ENCODE measurements at regions of chr3 and their contacts with region 1.

Region 1: DNA sequence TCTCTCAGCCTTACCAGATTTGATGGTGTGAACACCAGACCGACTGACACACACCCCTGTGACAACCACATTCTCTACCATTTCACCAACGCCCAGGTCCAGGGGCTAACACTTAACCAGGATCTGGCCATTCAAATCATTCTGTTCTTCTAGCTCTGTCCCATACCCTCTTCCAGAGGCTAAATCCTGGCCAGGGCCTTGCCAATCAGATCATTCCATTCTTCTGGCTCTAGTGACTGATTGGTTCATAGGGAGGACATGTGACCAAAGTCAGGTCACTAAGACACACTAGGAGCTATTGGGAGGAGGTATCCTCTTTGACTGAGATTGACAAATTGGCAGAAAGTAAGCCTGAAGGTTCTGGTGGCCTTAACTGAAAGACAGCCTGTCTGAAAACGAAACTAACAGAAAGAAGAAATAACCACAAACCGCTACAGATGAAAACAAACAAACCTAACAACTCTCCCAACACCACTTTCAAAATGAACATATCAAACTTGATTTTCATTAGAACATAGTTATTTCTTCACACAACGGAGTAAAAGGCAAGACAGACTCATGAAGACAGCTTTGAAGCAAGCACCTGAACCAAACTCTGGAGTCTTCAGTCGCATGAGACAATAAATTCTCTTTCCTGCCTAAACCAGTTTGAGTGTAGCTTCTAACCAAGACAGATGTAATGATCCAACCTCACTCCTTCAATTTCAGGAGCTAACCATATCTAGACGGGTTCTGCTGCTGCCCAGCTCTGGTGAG is 68.5 kb downstream of the TRANK1 start:
- DNase-seq: peak; percentile 41
- ATAC-seq: peak; percentile 97
- H3K4me3 Mint-ChIP-seq: peak overlapping the region; percentile 82
- H3K27ac Mint-ChIP-seq: peak overlapping the region; percentile 95
- H3K4me1 Mint-ChIP-seq: peaks cover 25% of the 10 kb centered on the region
- H3K27me3 Mint-ChIP-seq: no peaks in the 10 kb centered on the region

Region 2: DNA sequence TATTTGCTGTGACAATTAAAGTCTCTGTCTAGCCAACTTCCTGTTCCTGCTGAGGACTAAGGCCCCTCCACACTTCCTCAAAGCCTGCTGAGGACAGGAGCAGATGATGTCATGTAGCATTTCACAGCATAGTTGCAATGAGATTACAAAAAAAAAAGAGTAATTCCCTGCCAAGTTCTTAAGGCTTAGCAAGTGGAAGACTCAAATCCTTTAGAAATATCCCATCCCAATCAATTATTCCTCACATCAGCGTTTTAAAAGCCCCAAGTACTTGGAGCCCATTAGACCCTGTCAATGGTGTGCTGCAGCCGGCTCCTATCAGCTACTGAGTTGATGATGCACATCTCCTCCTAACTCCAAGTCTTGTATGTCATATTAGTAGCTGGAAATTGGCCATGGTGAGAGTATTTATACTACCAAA is 16.8 kb after region 1 on chr3:
- POLR2A ChIA-PET with region 1: interaction called, 17 read pairs
- DNase-seq: no peak
- ATAC-seq: peak; percentile 80
- H3K4me3 Mint-ChIP-seq: peak overlapping the region; percentile 29
- H3K27ac Mint-ChIP-seq: peak overlapping the region; percentile 64
- H3K4me1 Mint-ChIP-seq: peaks cover 32% of the 10 kb centered on the region
- H3K27me3 Mint-ChIP-seq: no peaks in the 10 kb centered on the region

Region 3: GRCh38 chr3:36911990-36912804 is 35.8 kb after region 1 on chr3:
- POLR2A ChIA-PET with region 1: interaction called, 20 read pairs
- DNase-seq: no peak
- ATAC-seq: peak; percentile 89
- H3K4me3 Mint-ChIP-seq: peak overlapping the region; percentile 81
- H3K27ac Mint-ChIP-seq: peak overlapping the region; percentile 92
- H3K4me1 Mint-ChIP-seq: peaks cover 32% of the 10 kb centered on the region
- H3K27me3 Mint-ChIP-seq: no peaks in the 10 kb centered on the region

Region 4: GRCh38 chr3:36944012-36944640 is 67.8 kb after region 1 on chr3:
- POLR2A ChIA-PET with region 1: interaction called, 10 read pairs
- DNase-seq: peak; percentile 69
- ATAC-seq: peak; percentile 37
- H3K4me3 Mint-ChIP-seq: peak overlapping the region; percentile 81
- H3K27ac Mint-ChIP-seq: peak overlapping the region; percentile 45
- H3K4me1 Mint-ChIP-seq: peaks cover 13% of the 10 kb centered on the region
- H3K27me3 Mint-ChIP-seq: peaks cover 2% of the 10 kb centered on the region

Measured in activated naive CD8-positive, alpha-beta T cell treated with anti-CD3 and anti-CD28 coated beads, Interleukin-2, amount 10 ng/mL, durations not matched to agents 7 days and 5 days (primary cell).